PC-9 (cell line): ENCODE measurements at regions of chr10 and their contacts with region 1.

Region 1: DNA sequence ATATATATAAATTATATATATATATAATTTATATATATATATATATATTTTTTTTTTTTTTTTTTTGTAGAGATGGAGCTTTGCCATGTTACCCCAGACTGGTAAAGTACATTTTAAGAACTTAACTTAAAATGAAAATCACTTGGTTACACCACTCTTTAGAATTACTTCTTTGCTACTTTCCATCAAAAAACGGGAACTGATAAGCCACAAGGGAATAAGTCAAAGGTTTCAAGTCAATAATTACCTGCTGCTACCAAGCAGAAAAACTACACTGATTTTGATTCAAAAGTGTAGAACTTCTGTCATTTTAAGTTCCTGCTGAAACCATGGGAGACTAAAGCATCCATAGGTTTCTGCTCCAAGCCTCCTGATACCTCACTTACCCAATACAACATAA is 12.2 kb downstream of the PPA1 start:
- DNase-seq: no peak
- H3K4me3 ChIP-seq: no peak overlapping the region; the same call in 1 of the 2 replicates
- H3K27ac ChIP-seq: peak overlapping the region; percentile 78
- H3K4me1 ChIP-seq: peaks cover 35% of the 10 kb centered on the region
- H3K27me3 ChIP-seq: no peaks in the 10 kb centered on the region
- CTCF ChIP-seq: no peak

Region 2: GRCh38 chr10:69425511-69426298 is 795.3 kb before region 1 on chr10:
- CTCF ChIA-PET with region 1: no interaction called
- POLR2A ChIA-PET with region 1: no interaction called
- intact Hi-C with region 1: no loop called
- DNase-seq: peak; percentile 69 to 98
- H3K4me3 ChIP-seq: no peak overlapping the region
- H3K27ac ChIP-seq: peak overlapping the region; percentile 44
- H3K4me1 ChIP-seq: peaks cover 28% of the 10 kb centered on the region
- H3K27me3 ChIP-seq: peaks cover 10% of the 10 kb centered on the region; the same call in 1 of the 2 replicates
- CTCF ChIP-seq: no peak

Region 3: DNA sequence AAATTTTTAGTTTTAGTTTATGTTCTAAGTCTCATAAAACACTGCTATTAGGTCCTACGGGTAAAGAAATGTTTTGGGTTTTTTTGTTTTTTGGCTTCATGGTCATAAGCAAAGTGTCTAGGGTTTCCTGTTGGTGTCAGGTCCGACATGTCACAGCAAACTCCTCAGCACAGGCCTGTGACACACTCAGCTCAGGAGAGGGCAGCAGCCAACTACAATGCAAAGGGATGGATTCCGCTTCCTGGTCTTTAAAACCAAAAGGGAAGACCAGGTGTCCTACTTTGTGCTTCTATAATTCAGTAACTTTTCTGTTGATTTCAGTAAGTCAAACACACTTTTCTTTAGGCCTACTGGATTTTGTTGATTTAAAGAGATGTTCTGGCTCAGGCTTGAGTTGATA is 252.2 kb before region 1 on chr10:
- CTCF ChIA-PET with region 1: no interaction called
- POLR2A ChIA-PET with region 1: no interaction called
- intact Hi-C with region 1: no loop called
- DNase-seq: peak in 1 of 2 experiments; percentile 18
- H3K4me3 ChIP-seq: no peak overlapping the region
- H3K27ac ChIP-seq: no peak overlapping the region
- H3K4me1 ChIP-seq: no peaks in the 10 kb centered on the region
- H3K27me3 ChIP-seq: peaks cover 89% of the 10 kb centered on the region
- CTCF ChIP-seq: no peak; the same call in 1 of the 2 replicates

Region 4: GRCh38 chr10:70201105-70201504 is 19.9 kb before region 1 on chr10:
- CTCF ChIA-PET with region 1: interaction called, 13 read pairs
- POLR2A ChIA-PET with region 1: no interaction called
- intact Hi-C with region 1: no loop called
- DNase-seq: no peak
- H3K4me3 ChIP-seq: no peak overlapping the region
- H3K27ac ChIP-seq: no peak overlapping the region
- H3K4me1 ChIP-seq: no peaks in the 10 kb centered on the region
- H3K27me3 ChIP-seq: no peaks in the 10 kb centered on the region
- CTCF ChIP-seq: no peak

Region 5: GRCh38 chr10:70265032-70265689 is 44.1 kb after region 1 on chr10:
- CTCF ChIA-PET with region 1: interaction called, 13 read pairs
- POLR2A ChIA-PET with region 1: interaction called, 4 read pairs
- intact Hi-C with region 1: no loop called
- DNase-seq: peak; percentile 16 to 21
- H3K4me3 ChIP-seq: no peak overlapping the region
- H3K27ac ChIP-seq: no peak overlapping the region
- H3K4me1 ChIP-seq: peaks cover 20% of the 10 kb centered on the region
- H3K27me3 ChIP-seq: no peaks in the 10 kb centered on the region
- CTCF ChIP-seq: peak; percentile 50; the same call in 1 of the 2 replicates

Region 6: GRCh38 chr10:70363971-70364771 is 143.1 kb after region 1 on chr10:
- CTCF ChIA-PET with region 1: interaction called, 85 read pairs
- POLR2A ChIA-PET with region 1: interaction called, 14 read pairs
- intact Hi-C with region 1: loop called (anchors 1 kb)
- DNase-seq: peak; percentile 94 to 98
- H3K4me3 ChIP-seq: peak overlapping the region; percentile 31; the same call in 1 of the 2 replicates
- H3K27ac ChIP-seq: peak overlapping the region; percentile 83
- H3K4me1 ChIP-seq: peaks cover 22% of the 10 kb centered on the region
- H3K27me3 ChIP-seq: no peaks in the 10 kb centered on the region
- CTCF ChIP-seq: peak; percentile 96

Region 7: DNA sequence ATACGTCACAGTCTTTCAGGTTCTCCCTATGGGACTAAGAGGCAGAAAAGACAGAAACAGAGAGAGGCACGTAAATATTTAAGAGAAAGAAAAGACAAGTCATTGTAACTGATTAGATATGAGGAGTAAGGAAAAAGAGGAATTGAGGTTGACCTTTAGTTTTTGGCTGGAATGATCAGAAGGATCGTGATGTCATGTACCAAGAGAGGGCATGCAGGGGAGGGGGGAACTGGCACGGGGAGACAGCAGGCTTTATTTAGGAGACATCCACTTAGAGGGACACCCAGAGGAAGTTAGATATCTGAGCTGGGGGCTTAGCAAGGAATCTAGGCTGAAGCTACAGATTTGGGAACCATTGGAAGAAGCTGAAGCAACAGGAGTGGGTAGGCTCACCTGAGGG is 170.6 kb after region 1 on chr10:
- CTCF ChIA-PET with region 1: interaction called, 44 read pairs
- POLR2A ChIA-PET with region 1: no interaction called
- intact Hi-C with region 1: loop called (anchors 1 kb)
- DNase-seq: no peak
- H3K4me3 ChIP-seq: no peak overlapping the region
- H3K27ac ChIP-seq: no peak overlapping the region
- H3K4me1 ChIP-seq: peaks cover 5% of the 10 kb centered on the region; the same call in 1 of the 2 replicates
- H3K27me3 ChIP-seq: no peaks in the 10 kb centered on the region
- CTCF ChIP-seq: no peak